ENCODE measurements at regions of chr3 and their contacts with region 1.

Region 1: DNA sequence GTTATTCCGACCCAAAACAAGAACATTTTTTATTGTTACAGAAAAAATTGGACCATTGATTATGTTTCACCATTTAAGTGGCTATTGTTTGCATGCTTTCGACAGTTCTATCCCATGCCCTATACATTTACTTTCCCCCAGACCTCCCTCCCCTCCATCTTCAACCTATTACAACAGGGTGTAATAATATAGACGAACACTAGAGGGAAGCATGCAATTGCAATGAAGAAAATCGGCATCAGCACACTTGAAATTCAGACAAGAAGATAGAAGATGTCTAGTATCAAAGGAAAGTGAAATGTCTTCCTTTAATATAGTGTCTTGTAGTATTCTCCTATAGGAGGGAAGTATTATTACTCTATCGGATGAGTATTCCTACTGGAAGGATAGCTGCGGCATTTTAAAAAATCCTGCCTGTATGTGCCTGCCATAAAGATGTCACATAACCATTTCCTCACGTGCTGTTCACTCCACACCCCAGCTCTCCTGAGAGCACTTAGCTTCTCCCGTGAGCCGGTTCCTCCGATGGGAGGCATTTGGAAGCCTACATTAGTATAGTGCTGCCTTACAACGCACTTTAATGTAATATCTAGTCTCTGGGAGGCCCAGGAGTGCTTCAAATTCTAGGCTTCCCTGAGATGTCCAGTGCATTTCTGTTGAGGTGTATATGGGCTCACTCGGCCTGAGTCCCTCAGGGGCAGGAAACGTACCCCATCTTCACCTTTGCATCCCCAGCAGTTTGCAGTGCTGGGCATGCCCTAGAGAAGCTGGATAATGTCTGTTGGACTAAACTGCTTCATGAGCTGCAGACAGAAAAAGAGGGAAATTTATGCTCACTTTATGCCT is 17.8 kb upstream of the ERICH6 start:
- DNase-seq: peak in 1 of 2 experiments; percentile 48
- H3K4me3 ChIP-seq: no peak overlapping the region
- H3K27ac ChIP-seq: no peak overlapping the region
- H3K4me1 ChIP-seq: 0 out of 2 replicates have a peak, but pooled peaks cover 5% of the 10 kb centered on the region
- H3K27me3 ChIP-seq: no peaks in the 10 kb centered on the region
- CTCF ChIP-seq: peak; percentile 93

Region 2: GRCh38 chr3:150538324-150539208 is 182.9 kb before region 1 on chr3:
- CTCF ChIA-PET with region 1: no interaction called
- POLR2A ChIA-PET with region 1: no interaction called
- intact Hi-C with region 1: no loop called
- DNase-seq: no peak
- H3K4me3 ChIP-seq: no peak overlapping the region
- H3K27ac ChIP-seq: no peak overlapping the region
- H3K4me1 ChIP-seq: peaks cover under 1% of the 10 kb centered on the region
- H3K27me3 ChIP-seq: no peaks in the 10 kb centered on the region
- CTCF ChIP-seq: no peak

Region 3: DNA sequence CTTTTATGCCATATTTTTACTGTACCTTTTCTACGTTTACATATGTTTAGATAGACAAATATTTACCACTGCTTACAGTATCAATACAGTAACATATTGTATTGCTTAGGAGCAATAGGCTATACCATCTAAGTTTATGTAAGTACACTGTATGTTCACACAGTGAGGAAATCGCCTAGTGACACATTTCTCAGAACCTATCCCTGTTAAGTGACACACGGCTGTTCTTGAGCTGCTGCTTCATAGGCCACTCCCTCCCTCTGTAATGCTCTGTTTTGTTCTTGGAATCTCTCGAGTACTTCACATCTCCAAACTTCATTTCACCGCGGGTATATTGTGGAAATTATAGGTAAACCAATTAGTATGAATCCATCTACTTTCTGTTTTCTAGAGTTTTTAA is 131.7 kb before region 1 on chr3:
- CTCF ChIA-PET with region 1: no interaction called
- POLR2A ChIA-PET with region 1: no interaction called
- intact Hi-C with region 1: loop called (anchors 5 kb)
- DNase-seq: no peak
- H3K4me3 ChIP-seq: no peak overlapping the region
- H3K27ac ChIP-seq: no peak overlapping the region
- H3K4me1 ChIP-seq: no peaks in the 10 kb centered on the region
- H3K27me3 ChIP-seq: no peaks in the 10 kb centered on the region
- CTCF ChIP-seq: no peak

Region 4: DNA sequence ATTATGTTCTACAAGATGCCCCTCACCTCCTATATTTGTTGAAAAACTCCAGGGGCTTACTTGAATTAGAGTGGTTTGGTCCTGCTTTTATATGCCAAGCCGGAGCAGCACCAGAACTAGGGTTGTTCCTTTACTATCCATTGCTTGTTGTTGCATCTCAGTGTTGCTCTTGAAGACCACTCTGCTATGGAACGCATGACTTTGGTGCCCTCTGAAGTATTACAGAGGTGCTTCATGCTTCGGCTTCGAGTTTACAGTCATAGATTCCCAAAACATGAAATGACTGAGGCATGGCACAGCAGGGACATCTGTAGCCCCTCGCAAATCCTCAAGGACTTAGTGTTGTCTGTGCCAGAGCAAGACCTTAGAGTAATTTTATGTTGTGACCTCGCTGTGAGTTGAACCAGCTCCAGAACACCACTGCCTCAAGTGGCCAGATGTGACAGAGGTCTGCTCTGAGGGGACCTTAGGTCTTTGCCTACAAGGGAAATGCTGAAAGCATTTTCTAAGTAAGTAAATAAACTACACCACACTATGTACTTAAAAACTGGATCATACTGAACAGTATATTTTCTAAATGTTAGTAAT is 108.7 kb after region 1 on chr3:
- CTCF ChIA-PET with region 1: interaction called, 20 read pairs
- POLR2A ChIA-PET with region 1: interaction called, 4 read pairs
- intact Hi-C with region 1: no loop called
- DNase-seq: no peak
- H3K4me3 ChIP-seq: no peak overlapping the region
- H3K27ac ChIP-seq: no peak overlapping the region
- H3K4me1 ChIP-seq: no peaks in the 10 kb centered on the region
- H3K27me3 ChIP-seq: no peaks in the 10 kb centered on the region
- CTCF ChIP-seq: peak; percentile 54

Region 5: GRCh38 chr3:150875548-150875947 is 154.0 kb after region 1 on chr3:
- CTCF ChIA-PET with region 1: no interaction called
- POLR2A ChIA-PET with region 1: no interaction called
- intact Hi-C with region 1: no loop called
- DNase-seq: no peak
- H3K4me3 ChIP-seq: no peak overlapping the region
- H3K27ac ChIP-seq: no peak overlapping the region
- H3K4me1 ChIP-seq: peaks cover 5% of the 10 kb centered on the region; the same call in 1 of the 2 replicates
- H3K27me3 ChIP-seq: no peaks in the 10 kb centered on the region
- CTCF ChIP-seq: no peak

Region 6: GRCh38 chr3:150925751-150926201 is 204.3 kb after region 1 on chr3:
- CTCF ChIA-PET with region 1: interaction called, 3 read pairs
- POLR2A ChIA-PET with region 1: no interaction called
- intact Hi-C with region 1: loop called (anchors 5 kb)
- DNase-seq: peak in 1 of 2 experiments; percentile 77
- H3K4me3 ChIP-seq: no peak overlapping the region
- H3K27ac ChIP-seq: no peak overlapping the region
- H3K4me1 ChIP-seq: no peaks in the 10 kb centered on the region
- H3K27me3 ChIP-seq: peaks cover 4% of the 10 kb centered on the region; the same call in 1 of the 2 replicates
- CTCF ChIP-seq: peak; percentile 92

Region 7: GRCh38 chr3:151093905-151094304 is 372.4 kb after region 1 on chr3:
- CTCF ChIA-PET with region 1: no interaction called
- POLR2A ChIA-PET with region 1: no interaction called
- intact Hi-C with region 1: no loop called
- DNase-seq: no peak
- H3K4me3 ChIP-seq: no peak overlapping the region
- H3K27ac ChIP-seq: no peak overlapping the region
- H3K4me1 ChIP-seq: no peaks in the 10 kb centered on the region
- H3K27me3 ChIP-seq: no peaks in the 10 kb centered on the region
- CTCF ChIP-seq: no peak

Region 8: DNA sequence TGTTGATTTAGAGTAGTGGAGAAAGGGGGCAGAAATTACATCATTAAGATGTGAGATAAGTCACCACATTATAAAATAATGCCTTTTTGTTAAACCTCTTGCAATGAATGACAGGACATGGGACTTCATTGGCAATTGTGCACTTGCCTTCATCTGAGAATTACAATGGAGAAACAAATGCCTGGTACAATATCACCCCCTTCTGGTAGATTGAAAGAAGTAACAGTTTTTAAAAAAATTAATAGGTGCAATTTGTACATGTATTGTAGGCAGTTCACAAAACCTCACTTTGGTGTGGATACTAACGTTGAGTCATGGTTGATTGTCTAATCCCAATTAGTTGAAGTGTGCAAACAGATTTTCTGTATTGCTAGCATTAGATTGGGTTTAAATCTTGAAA is 561.4 kb after region 1 on chr3:
- CTCF ChIA-PET with region 1: no interaction called
- POLR2A ChIA-PET with region 1: no interaction called
- intact Hi-C with region 1: loop called (anchors 5 kb)
- DNase-seq: peak in 1 of 2 experiments; percentile 54
- H3K4me3 ChIP-seq: no peak overlapping the region
- H3K27ac ChIP-seq: no peak overlapping the region
- H3K4me1 ChIP-seq: peaks cover 8% of the 10 kb centered on the region
- H3K27me3 ChIP-seq: no peaks in the 10 kb centered on the region
- CTCF ChIP-seq: peak; percentile 91

Region 9: DNA sequence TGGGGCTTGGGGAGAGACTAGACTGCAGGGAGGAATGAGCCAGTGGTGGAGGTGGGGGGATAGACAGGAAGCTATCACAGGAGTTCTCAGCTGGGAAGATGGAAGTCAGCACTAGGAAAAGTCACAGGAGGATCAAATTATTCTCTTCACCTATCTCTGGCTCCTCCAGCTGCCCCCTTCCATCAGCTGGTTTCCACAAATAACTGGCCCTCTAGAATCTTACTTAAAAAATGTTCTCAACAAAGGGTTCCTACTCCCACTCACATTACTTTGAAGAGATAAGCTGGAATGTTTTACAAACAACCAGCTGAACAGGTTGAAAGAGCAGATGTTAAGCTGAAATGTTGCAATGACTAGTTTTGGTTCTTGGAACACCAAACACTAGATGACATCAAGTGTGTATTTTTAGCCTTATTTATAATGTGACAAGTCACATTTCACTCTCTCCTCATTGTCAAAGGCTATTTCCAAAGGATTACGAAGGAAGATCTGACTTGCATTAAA is 909.5 kb after region 1 on chr3:
- CTCF ChIA-PET with region 1: no interaction called
- POLR2A ChIA-PET with region 1: no interaction called
- intact Hi-C with region 1: no loop called
- DNase-seq: peak in 1 of 2 experiments; percentile 38
- H3K4me3 ChIP-seq: no peak overlapping the region
- H3K27ac ChIP-seq: no peak overlapping the region
- H3K4me1 ChIP-seq: 0 out of 2 replicates have a peak, but pooled peaks cover 6% of the 10 kb centered on the region
- H3K27me3 ChIP-seq: no peaks in the 10 kb centered on the region
- CTCF ChIP-seq: no peak